A549 (cell line): ENCODE measurements at regions of chr1 and their contacts with region 1.

Region 1: DNA sequence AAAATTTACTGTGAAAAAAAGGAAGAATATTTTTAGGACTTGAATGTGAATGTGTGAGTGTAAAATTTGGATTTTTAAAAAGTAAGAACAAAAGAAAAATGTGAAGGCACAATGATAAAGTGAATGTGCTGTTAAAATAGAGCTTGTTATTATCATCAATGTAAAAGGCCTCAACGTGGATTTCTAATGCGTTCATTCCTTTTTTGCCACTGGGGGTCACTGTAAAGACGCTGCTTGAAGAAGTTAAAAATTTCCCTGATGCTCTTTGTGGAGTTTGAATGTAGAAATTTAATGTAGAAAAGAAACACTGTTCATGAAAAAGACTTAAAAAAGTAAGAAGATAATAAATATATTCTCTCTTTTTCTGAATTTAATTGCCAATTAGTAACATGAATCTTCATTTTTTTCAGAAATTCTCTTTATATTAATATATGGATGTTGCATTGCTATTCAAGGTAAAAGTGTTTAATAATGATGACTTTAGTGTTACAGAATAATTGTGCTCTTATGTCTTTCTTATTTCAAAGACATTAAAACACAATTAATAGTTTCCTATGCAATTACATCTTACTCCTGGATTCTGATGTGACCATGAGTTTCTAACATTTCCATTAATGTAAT is 161.5 kb downstream of the DNM3 start:
- DNase-seq: peak; percentile 10 to 69
- ATAC-seq: peak; percentile 66 to 68; a peak in 3 of 6 replicates
- H3K4me3 ChIP-seq: no peak overlapping the region
- H3K27ac ChIP-seq: no peak overlapping the region
- H3K4me1 ChIP-seq: peaks cover 8% of the 10 kb centered on the region; the same call in 1 of the 3 replicates
- CTCF ChIP-seq: peak; percentile 95
- EP300 ChIP-seq: no peak
- POLR2A ChIP-seq: no peak
- RAD21 ChIP-seq: peak; percentile 93

Region 2: GRCh38 chr1:171940373-171940772 is 62.5 kb before region 1 on chr1:
- CTCF ChIA-PET with region 1: no interaction called
- POLR2A ChIA-PET with region 1: no interaction called
- DNase-seq: no peak
- ATAC-seq: no peak
- H3K4me3 ChIP-seq: no peak overlapping the region
- H3K27ac ChIP-seq: no peak overlapping the region
- H3K4me1 ChIP-seq: no peaks in the 10 kb centered on the region; the same call in 2 of the 3 replicates
- CTCF ChIP-seq: no peak
- EP300 ChIP-seq: no peak
- POLR2A ChIP-seq: no peak
- RAD21 ChIP-seq: no peak

Region 3: DNA sequence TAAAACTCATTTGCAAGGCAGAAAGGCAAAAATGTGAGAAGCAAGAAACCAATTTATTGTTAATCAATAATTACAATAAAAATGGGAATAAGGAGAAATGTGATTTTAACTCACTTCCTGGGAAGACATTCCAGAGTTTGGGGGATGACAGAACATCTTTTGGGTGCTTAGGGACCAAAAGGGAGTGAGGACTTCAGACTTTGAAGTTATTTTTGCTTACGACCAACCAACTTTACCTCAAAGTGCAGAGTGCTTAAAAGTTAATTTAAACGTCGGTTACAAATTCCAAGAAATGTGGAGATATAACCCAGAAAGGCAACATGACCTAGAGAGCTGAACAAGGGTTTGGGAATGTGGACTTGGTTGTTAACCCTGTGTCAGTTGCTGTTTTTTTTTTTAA is 183.2 kb after region 1 on chr1:
- CTCF ChIA-PET with region 1: no interaction called
- POLR2A ChIA-PET with region 1: no interaction called
- DNase-seq: no peak
- ATAC-seq: no peak
- H3K4me3 ChIP-seq: no peak overlapping the region
- H3K27ac ChIP-seq: no peak overlapping the region
- H3K4me1 ChIP-seq: peaks cover 17% of the 10 kb centered on the region
- CTCF ChIP-seq: no peak
- EP300 ChIP-seq: no peak
- POLR2A ChIP-seq: no peak
- RAD21 ChIP-seq: no peak

Region 4: DNA sequence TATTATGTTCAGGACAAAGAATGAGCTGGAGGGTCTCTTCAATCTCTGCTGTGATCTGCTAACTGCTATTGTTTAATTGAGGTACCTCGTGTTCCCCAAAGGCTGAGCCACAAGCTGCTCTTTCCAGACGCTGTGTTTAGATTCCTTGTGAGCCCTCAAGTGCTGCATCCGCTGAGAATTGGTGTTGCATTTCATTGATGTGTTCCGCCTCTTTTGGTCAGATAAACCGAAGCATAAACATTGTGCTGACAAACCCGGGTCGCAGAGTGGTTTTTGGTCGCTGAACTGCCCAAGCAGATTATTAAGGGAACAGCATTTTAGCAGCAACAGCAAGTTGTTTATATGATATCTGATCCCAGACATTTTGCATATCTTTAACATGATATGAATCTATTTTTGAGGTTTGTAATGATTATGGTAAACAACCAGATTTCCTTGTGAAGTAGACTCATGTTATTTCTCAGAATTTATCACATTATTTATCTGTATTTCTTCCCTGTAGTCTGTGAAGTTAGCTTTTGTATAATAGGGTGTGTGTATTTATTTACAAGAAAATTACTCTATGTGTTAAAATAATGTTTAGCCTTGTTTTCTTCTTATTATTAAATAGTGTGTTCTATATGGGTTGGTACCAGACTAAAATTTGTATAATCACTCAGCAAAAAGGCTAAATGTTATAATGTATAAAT is 200.4 kb after region 1 on chr1:
- CTCF ChIA-PET with region 1: no interaction called
- POLR2A ChIA-PET with region 1: no interaction called
- DNase-seq: no peak
- ATAC-seq: no peak
- H3K4me3 ChIP-seq: no peak overlapping the region
- H3K27ac ChIP-seq: no peak overlapping the region
- H3K4me1 ChIP-seq: no peaks in the 10 kb centered on the region
- CTCF ChIP-seq: no peak
- EP300 ChIP-seq: no peak
- POLR2A ChIP-seq: no peak
- RAD21 ChIP-seq: no peak

Region 5: DNA sequence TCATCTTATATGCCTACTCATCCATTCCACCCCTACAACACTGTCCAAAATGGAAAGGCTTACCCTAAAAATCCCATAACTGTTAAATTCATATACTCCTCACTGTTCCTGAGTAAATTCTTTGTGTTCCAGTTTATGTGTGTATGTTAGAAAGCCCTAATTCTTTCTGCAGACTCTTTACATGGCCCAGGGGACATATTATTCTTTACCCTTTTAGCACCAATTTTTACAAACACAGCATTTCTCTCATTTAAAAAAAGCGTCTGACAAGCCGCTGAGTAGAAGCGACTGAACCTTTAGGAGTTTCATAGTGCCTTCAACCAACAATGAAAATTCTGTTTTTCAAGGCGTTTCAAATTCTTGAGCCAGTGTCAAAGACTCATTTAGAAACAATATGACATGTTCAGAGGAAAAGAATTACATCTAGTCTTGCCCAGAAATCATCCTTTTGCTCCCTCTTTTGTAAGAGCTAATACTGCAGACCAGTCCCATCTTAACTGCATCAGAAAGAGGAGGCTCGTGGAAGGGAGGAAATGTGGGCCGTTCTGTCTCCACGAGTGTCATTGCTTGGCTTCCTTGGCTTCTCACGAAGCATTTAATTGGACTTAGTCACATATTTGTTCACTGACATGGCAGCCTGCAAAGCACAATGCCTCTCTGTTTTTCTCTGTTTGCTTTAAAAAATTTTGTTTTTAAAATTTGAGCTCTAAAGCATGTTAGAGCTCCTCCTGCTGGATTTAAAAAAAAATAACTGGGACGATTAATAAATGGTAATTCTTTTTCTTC is 396.3 kb after region 1 on chr1:
- CTCF ChIA-PET with region 1: interaction called, 48 read pairs
- POLR2A ChIA-PET with region 1: interaction called, 6 read pairs
- DNase-seq: peak; percentile 78 to 90
- ATAC-seq: peak; percentile 90 to 95
- H3K4me3 ChIP-seq: no peak overlapping the region; the same call in 2 of the 3 replicates
- H3K27ac ChIP-seq: peak overlapping the region; percentile 83 to 86
- H3K4me1 ChIP-seq: peaks cover 28% of the 10 kb centered on the region
- CTCF ChIP-seq: peak; percentile 92
- EP300 ChIP-seq: peak; percentile 13 to 14; a peak in 1 of 5 replicates
- POLR2A ChIP-seq: no peak
- RAD21 ChIP-seq: peak; percentile 93 to 99

Region 6: GRCh38 chr1:172429331-172430127 is 426.7 kb after region 1 on chr1:
- CTCF ChIA-PET with region 1: interaction called, 32 read pairs
- POLR2A ChIA-PET with region 1: no interaction called
- DNase-seq: peak; percentile 65 to 82
- ATAC-seq: peak; percentile 74 to 89
- H3K4me3 ChIP-seq: no peak overlapping the region
- H3K27ac ChIP-seq: no peak overlapping the region
- H3K4me1 ChIP-seq: no peaks in the 10 kb centered on the region
- CTCF ChIP-seq: peak; percentile 99
- EP300 ChIP-seq: no peak
- POLR2A ChIP-seq: no peak
- RAD21 ChIP-seq: peak; percentile 95 to 96

Region 7: GRCh38 chr1:172443626-172444453 is 441.0 kb after region 1 on chr1 and contains the start of gene PIGC:
- CTCF ChIA-PET with region 1: interaction called, 28 read pairs
- POLR2A ChIA-PET with region 1: no interaction called
- DNase-seq: peak; percentile 90
- ATAC-seq: peak; percentile 97 to 99
- H3K4me3 ChIP-seq: peak within 1 kb of the TSS; percentile 92
- H3K27ac ChIP-seq: peak within 1 kb of the TSS; percentile 94 to 98
- H3K4me1 ChIP-seq: peaks cover 25% of the 10 kb centered on the region
- CTCF ChIP-seq: peak; percentile 79
- EP300 ChIP-seq: no peak
- POLR2A ChIP-seq: peak; percentile 59
- RAD21 ChIP-seq: peak; percentile 69 to 70
- polyA plus RNA-seq, gene PIGC: 50.0 and 51.4 TPM in 2 replicates